Common myeloid progenitor, CD34-positive (primary cell): ENCODE measurements at regions of chr1 and their contacts with region 1.

Region 1: DNA sequence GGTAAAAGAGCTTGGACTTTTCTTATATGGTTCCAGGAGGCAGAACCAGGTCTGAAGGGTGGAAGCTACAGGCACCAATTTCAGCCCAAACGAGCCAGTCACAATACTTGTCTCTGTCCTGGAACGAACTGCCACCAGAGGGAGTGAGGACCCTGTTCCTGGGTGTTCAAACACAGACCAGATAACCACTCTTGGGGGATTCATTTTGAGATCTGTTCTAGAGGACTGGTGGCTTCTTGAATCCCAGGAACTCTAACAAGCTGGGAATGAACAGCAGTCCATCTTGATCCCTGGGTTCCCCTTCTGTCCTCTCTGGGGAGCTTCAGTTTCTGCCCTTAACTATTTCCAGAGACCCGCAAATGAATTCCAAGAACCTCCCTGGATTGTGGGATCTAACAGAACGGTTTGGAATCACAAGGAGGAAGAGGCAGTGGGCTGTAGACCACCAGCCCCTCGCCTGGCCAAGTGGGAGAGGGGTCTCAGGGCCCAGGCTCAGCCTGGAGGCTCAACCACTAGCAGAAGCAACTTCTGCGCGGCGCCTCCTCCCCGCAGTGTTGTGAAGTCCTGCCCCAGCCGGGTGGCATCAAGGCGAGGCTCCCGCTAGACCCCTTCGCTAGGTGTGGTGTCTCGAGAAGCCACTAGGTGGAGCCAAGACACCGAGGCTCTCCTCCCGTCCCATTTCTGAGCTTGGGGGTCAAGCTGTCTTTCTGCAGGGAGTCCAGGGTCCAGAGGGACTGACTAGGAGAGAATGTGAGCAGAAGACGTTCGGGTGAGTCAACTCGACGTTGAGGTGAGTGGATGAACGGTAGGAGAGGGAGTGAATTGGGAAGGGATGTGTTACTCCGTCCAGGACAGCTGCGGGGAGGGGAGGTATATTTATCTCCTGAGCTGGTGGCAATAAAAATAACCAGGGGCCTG is 12.1 kb upstream of the NES start:
- DNase-seq: peak; percentile 75 to 86 (median 85)
- H3K4me3 ChIP-seq: peak overlapping the region in 1 of 7 experiments; percentile 11
- H3K27ac ChIP-seq: no peak overlapping the region
- H3K4me1 ChIP-seq: peaks cover 0 to 42% (median 29%) of the 10 kb centered on the region in 4 experiments
- H3K27me3 ChIP-seq: peaks cover 0 to 59% (median 31%) of the 10 kb centered on the region in 5 experiments

Region 2: GRCh38 chr1:156504821-156505678 is 184.2 kb before region 1 on chr1:
- CTCF ChIA-PET with region 1: no interaction called
- POLR2A ChIA-PET with region 1: no interaction called
- DNase-seq: peak; percentile 99 to 100 (median 100)
- H3K4me3 ChIP-seq: peak overlapping the region in 5 of 7 experiments; percentile 19 to 58 (median 52)
- H3K27ac ChIP-seq: peak overlapping the region; percentile 95 to 97
- H3K4me1 ChIP-seq: peaks cover 21 to 72% (median 61%) of the 10 kb centered on the region in 4 experiments
- H3K27me3 ChIP-seq: no peaks in the 10 kb centered on the region

Region 3: GRCh38 chr1:156659994-156660751 is 29.1 kb before region 1 on chr1:
- CTCF ChIA-PET with region 1: interaction called, 351 read pairs
- POLR2A ChIA-PET with region 1: interaction called, 4 read pairs
- DNase-seq: peak; percentile 92 to 96 (median 95)
- H3K4me3 ChIP-seq: peak overlapping the region in 3 of 7 experiments; percentile 25 to 31 (median 26)
- H3K27ac ChIP-seq: peak overlapping the region in 1 of 2 experiments; percentile 81
- H3K4me1 ChIP-seq: peaks cover 3 to 87% (median 76%) of the 10 kb centered on the region in 4 experiments
- H3K27me3 ChIP-seq: peaks cover 0 to 26% (median 16%) of the 10 kb centered on the region in 5 experiments

Region 4: GRCh38 chr1:156677616-156678596 is 11.4 kb before region 1 on chr1:
- CTCF ChIA-PET with region 1: interaction called, 92 read pairs
- POLR2A ChIA-PET with region 1: no interaction called
- DNase-seq: peak; percentile 67 to 73 (median 68)
- H3K4me3 ChIP-seq: peak overlapping the region in 2 of 7 experiments; percentile 20 to 24
- H3K27ac ChIP-seq: no peak overlapping the region
- H3K4me1 ChIP-seq: peaks cover 0 to 16% (median 12%) of the 10 kb centered on the region in 4 experiments
- H3K27me3 ChIP-seq: peaks cover 0 to 88% (median 33%) of the 10 kb centered on the region in 5 experiments

Region 5: DNA sequence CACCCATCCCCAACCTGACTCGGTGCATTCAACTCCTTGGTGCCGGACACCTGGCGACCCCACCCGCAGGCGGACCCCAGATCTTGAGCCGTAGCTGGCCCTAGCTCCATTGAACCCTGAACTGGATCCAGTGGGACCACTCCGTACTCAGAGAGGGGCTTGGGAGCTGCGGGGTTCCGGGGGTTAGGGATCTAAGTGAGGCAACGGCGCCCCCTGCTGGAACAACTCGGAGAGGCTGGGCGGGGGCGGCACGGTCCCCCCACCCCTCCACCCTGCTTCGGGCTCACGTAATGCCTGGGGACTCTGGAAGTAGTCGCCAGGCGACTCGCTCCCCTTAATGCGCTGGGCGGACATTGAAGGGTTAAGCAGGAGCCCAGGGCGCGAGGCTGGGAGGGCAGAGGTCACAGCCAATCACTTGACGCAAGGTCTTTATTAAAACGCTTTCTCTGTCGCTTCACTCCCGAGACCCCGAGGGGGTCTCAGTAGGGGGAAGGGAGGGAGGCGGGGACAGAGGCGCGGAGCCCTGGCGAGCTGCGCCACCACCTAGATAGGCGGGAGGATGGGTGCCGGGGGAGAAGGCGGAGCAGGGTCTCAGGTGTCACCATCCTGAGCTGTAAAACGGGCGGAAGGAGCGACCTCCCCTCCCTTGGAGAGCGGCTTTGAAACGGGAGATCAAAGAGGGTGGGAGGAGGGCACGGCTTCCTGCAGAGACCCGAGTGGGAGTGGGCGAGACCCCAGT is 16.8 kb after region 1 on chr1:
- CTCF ChIA-PET with region 1: interaction called, 236 read pairs
- POLR2A ChIA-PET with region 1: interaction called, 8 read pairs
- DNase-seq: peak; percentile 50 to 75 (median 73)
- H3K4me3 ChIP-seq: peak overlapping the region in 6 of 7 experiments; percentile 19 to 70 (median 52)
- H3K27ac ChIP-seq: no peak overlapping the region
- H3K4me1 ChIP-seq: peaks cover 0 to 27% (median 21%) of the 10 kb centered on the region in 4 experiments
- H3K27me3 ChIP-seq: peaks cover 7 to 75% (median 30%) of the 10 kb centered on the region in 5 experiments

Region 6: DNA sequence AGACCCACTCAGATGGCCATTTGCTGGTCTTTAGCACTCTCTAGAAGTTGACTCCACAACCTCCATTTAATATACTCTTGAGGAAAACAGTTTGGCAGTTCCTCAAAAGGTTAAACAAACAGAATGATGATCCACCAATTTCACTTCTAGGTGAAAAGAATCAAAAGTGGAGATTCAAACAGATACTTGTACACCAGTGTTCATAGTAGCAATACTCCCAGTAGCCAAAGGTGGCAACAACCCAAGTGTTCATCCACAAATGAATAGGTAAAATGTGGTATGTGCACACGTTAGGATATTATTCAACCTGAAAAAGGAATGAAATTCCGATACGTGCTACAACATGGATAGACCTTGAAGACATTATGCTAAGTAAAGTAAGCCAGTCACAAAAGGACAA is 84.3 kb after region 1 on chr1:
- CTCF ChIA-PET with region 1: interaction called, 11 read pairs
- POLR2A ChIA-PET with region 1: no interaction called
- DNase-seq: peak in 2 of 3 donors; percentile 50 to 54
- H3K4me3 ChIP-seq: no peak overlapping the region
- H3K27ac ChIP-seq: no peak overlapping the region
- H3K4me1 ChIP-seq: peaks cover 10 to 25% (median 17%) of the 10 kb centered on the region in 4 experiments
- H3K27me3 ChIP-seq: no peaks in the 10 kb centered on the region

Region 7: GRCh38 chr1:156860113-156860627 is 170.9 kb after region 1 on chr1:
- CTCF ChIA-PET with region 1: interaction called, 30 read pairs
- POLR2A ChIA-PET with region 1: no interaction called
- DNase-seq: peak; percentile 31 to 61 (median 57)
- H3K4me3 ChIP-seq: peak overlapping the region; percentile 22 to 69 (median 54)
- H3K27ac ChIP-seq: no peak overlapping the region
- H3K4me1 ChIP-seq: peaks cover 2 to 43% (median 39%) of the 10 kb centered on the region in 4 experiments
- H3K27me3 ChIP-seq: peaks cover 0 to 78% (median 47%) of the 10 kb centered on the region in 5 experiments

Region 8: DNA sequence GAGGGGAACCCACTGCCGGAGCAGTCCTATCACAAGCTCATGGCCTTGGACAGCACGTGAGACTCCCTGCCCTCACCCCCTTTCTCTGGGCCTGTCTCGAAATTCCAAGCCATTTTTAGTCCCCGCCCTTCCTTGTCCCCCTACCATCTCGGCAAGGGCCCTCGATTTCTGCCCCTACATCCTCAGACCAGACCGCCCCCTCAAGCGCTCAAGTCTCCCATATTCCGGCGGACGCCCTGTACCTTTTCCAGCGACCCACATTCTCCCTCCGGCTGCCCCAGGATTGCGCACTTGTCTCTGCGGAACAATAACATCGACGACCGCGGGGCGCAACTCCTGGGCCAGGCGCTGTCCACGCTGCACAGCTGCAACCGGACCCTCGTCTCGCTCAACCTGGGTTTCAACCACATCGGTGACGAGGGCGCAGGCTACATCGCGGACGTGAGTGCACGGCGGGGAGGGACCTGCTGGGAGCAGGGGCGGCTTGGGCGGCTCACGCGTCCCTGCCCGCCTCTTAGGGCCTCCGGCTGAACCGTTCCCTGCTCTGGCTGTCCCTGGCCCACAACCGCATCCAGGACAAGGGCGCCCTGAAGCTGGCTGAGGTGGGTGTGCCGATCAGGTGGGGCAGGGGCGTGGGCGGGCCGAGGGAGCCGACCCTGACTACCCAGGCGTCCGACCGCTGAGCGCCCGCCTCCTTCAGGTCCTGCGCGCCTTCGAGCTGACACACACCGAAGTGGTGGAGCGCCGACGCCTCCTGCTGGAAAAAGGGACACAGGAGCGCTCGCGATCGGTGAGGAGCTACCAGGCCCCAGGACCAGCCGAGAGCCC is 238.1 kb after region 1 on chr1:
- CTCF ChIA-PET with region 1: interaction called, 18 read pairs
- POLR2A ChIA-PET with region 1: interaction called, 3 read pairs
- DNase-seq: peak; percentile 77 to 82 (median 81)
- H3K4me3 ChIP-seq: peak overlapping the region in 5 of 7 experiments; percentile 9 to 71 (median 53)
- H3K27ac ChIP-seq: no peak overlapping the region
- H3K4me1 ChIP-seq: peaks cover 0 to 51% (median 33%) of the 10 kb centered on the region in 4 experiments
- H3K27me3 ChIP-seq: peaks cover 1 to 63% (median 33%) of the 10 kb centered on the region in 5 experiments